PC-3 (cell line): ENCODE measurements at regions of chrX and their contacts with region 1.

Region 1: GRCh38 chrX:103686199-103687072 is at the start of gene MORF4L2:
- DNase-seq: peak; percentile 97
- ATAC-seq: peak; percentile 83
- H3K4me3 ChIP-seq: peak within 1 kb of the TSS; percentile 97
- H3K27ac ChIP-seq: peak within 1 kb of the TSS; percentile 98
- H3K4me1 ChIP-seq: peaks cover 22% of the 10 kb centered on the region
- H3K27me3 ChIP-seq: no peaks in the 10 kb centered on the region
- CTCF ChIP-seq: no peak
- total RNA-seq, gene MORF4L2: 349 and 414 TPM in 2 replicates

Region 2: GRCh38 chrX:103533511-103534216 is 152.8 kb before region 1 on chrX:
- CTCF ChIA-PET with region 1: no interaction called
- POLR2A ChIA-PET with region 1: no interaction called
- intact Hi-C with region 1: loop called (anchors 2 kb)
- DNase-seq: peak; percentile 83
- ATAC-seq: peak; percentile 86
- H3K4me3 ChIP-seq: peak overlapping the region; percentile 62
- H3K27ac ChIP-seq: no peak overlapping the region
- H3K4me1 ChIP-seq: peaks cover 5% of the 10 kb centered on the region
- H3K27me3 ChIP-seq: no peaks in the 10 kb centered on the region
- CTCF ChIP-seq: peak; percentile 89

Region 3: DNA sequence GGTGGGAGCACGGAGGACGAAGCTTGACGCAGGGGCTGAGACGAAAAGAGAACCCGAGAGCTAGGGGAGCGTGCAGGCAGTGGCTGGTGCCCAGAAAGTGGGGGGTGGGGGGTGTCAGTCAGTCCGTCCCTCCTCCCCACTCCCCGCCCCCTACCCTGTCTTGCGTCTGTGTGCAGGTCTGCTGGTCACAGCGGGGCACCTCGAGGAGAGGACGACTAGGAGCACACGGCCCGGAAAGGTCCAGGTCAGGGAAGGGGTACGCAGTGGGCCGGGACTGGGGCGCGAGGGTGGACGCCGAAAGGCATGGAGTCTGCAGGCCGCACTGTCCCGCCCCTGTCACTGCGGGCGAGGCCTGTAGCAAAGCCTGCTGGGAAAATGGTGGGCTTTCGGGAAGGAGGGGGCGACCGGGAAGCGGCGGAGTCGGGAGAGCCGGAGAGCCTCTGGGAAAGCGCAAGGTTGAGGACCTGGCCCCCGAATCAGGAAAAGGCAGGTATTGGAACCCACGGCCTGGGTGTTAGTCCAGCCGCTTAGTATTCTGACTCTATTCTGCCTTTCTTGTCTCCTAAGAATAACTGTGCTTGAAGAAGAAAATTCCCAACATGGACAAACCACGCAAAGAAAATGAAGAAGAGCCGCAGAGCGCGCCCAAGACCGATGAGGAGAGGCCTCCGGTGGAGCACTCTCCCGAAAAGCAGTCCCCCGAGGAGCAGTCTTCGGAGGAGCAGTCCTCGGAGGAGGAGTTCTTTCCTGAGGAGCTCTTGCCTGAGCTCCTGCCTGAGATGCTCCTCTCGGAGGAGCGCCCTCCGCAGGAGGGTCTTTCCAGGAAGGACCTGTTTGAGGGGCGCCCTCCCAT is 56.9 kb before region 1 on chrX:
- CTCF ChIA-PET with region 1: interaction called, 3 read pairs
- POLR2A ChIA-PET with region 1: interaction called, 14 read pairs
- intact Hi-C with region 1: no loop called
- DNase-seq: peak; percentile 75
- ATAC-seq: peak; percentile 80
- H3K4me3 ChIP-seq: peak overlapping the region; percentile 96
- H3K27ac ChIP-seq: peak overlapping the region; percentile 88
- H3K4me1 ChIP-seq: peaks cover 19% of the 10 kb centered on the region
- H3K27me3 ChIP-seq: no peaks in the 10 kb centered on the region
- CTCF ChIP-seq: peak; percentile 92

Region 4: GRCh38 chrX:103774070-103774642 is 87.7 kb after region 1 on chrX:
- CTCF ChIA-PET with region 1: interaction called, 23 read pairs
- POLR2A ChIA-PET with region 1: no interaction called
- intact Hi-C with region 1: loop called (anchors 1 kb)
- DNase-seq: peak; percentile 72
- ATAC-seq: peak; percentile 89
- H3K4me3 ChIP-seq: no peak overlapping the region
- H3K27ac ChIP-seq: no peak overlapping the region
- H3K4me1 ChIP-seq: no peaks in the 10 kb centered on the region
- H3K27me3 ChIP-seq: peaks cover 4% of the 10 kb centered on the region; the same call in 1 of the 2 replicates
- CTCF ChIP-seq: peak; percentile 78

Region 5: GRCh38 chrX:103918581-103919269 is 232.3 kb after region 1 on chrX:
- CTCF ChIA-PET with region 1: no interaction called
- POLR2A ChIA-PET with region 1: no interaction called
- intact Hi-C with region 1: loop called (anchors 5 kb)
- DNase-seq: peak; percentile 72
- ATAC-seq: peak; percentile 82
- H3K4me3 ChIP-seq: peak overlapping the region; percentile 82
- H3K27ac ChIP-seq: peak overlapping the region; percentile 38
- H3K4me1 ChIP-seq: peaks cover 6% of the 10 kb centered on the region
- H3K27me3 ChIP-seq: no peaks in the 10 kb centered on the region
- CTCF ChIP-seq: no peak

Region 6: DNA sequence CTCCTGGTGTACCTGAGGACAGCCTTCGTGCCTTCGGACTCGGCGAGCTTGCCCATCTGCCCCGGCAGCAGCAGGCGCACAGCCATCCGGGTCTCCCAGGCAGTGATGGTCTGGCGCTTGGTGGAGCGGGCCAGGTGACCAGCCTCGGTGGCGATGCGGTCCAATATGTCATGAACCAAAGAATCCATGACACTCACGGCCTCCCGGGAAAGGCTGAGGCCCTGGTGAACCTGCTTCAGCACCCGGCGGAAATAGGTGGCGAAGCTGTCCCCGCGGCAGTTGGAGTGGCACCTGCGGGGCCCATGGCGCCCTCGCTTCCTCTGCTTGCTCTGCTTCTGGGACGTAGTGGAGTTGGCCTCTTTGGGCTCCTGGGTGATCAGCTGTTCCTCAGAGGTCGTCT is 326.7 kb after region 1 on chrX:
- CTCF ChIA-PET with region 1: no interaction called
- POLR2A ChIA-PET with region 1: no interaction called
- intact Hi-C with region 1: no loop called
- DNase-seq: no peak
- ATAC-seq: no peak
- H3K4me3 ChIP-seq: no peak overlapping the region
- H3K27ac ChIP-seq: no peak overlapping the region
- H3K4me1 ChIP-seq: no peaks in the 10 kb centered on the region
- H3K27me3 ChIP-seq: peaks cover 65% of the 10 kb centered on the region
- CTCF ChIP-seq: no peak